ENCODE measurements at regions of chr4 and their contacts with region 1.

Region 1: DNA sequence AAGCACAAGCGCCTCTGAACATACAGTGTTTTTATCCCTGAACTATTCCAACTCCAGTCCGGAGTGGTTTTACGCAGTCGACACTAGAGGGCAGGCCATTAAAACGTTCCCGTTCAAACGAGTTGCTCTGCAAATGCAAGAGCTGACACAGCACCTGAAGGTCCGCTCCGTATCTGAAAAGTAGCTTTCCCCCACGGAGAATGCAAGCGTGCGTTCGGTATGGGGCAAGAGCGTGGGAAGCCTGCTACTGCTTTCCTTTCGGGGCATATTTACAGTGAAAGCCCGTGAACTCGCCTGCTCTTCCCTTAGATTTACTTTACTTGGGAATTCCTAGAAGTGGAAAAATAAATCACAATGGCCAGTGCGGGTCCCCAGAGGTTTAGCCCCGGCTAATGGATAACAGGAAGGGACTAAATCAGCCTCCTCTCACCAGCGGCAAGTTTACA is 190.8 kb downstream of the TSPAN5 start:
- DNase-seq: peak; percentile 46 to 56
- ATAC-seq: peak; percentile 93 to 99
- H3K4me3 ChIP-seq: peak overlapping the region; percentile 32 to 61 (median 47)
- H3K27ac ChIP-seq: no peak overlapping the region
- H3K4me1 ChIP-seq: peaks cover 3 to 5% of the 10 kb centered on the region in 2 donors
- H3K27me3 ChIP-seq: no peaks in the 10 kb centered on the region
- CTCF ChIP-seq: peak; percentile 38 to 73 (median 66)
- POLR2A ChIP-seq: no peak

Region 2: DNA sequence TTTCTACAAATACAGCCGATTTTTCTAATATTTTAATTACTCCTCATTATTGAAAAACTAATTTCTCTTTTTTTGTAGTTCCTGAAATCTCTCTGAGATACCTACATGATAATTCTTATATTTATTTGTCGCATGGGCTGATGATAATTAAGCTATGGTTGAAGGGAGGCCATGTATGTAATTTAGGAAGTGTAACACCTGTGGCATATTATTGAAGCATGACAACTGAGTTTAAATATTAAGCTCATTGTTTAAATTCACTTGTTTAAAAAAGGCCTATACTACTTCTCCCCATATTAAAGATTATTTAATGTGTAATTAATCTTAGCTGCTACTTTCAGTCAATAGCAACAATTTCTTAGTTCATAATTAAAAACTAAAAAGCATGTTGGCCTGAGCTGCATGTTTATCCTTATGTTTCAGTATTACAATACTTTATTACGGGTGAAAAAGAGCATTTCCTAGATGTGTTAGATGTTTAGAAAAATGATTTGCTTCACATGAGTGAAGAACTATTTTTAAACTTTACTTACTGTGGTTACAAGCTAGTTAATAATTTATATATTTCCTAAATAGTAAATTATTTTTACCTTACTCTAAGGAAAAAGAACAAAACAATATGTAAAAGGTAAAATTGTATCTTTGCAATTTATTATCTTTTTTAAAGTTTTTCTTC is 84.1 kb before region 1 on chr4:
- in situ Hi-C with region 1: no loop called
- intact Hi-C with region 1: no loop called
- DNase-seq: no peak
- ATAC-seq: no peak
- H3K4me3 ChIP-seq: no peak overlapping the region
- H3K27ac ChIP-seq: no peak overlapping the region
- H3K4me1 ChIP-seq: no peaks in the 10 kb centered on the region
- H3K27me3 ChIP-seq: no peaks in the 10 kb centered on the region
- CTCF ChIP-seq: no peak
- POLR2A ChIP-seq: no peak

Region 3: DNA sequence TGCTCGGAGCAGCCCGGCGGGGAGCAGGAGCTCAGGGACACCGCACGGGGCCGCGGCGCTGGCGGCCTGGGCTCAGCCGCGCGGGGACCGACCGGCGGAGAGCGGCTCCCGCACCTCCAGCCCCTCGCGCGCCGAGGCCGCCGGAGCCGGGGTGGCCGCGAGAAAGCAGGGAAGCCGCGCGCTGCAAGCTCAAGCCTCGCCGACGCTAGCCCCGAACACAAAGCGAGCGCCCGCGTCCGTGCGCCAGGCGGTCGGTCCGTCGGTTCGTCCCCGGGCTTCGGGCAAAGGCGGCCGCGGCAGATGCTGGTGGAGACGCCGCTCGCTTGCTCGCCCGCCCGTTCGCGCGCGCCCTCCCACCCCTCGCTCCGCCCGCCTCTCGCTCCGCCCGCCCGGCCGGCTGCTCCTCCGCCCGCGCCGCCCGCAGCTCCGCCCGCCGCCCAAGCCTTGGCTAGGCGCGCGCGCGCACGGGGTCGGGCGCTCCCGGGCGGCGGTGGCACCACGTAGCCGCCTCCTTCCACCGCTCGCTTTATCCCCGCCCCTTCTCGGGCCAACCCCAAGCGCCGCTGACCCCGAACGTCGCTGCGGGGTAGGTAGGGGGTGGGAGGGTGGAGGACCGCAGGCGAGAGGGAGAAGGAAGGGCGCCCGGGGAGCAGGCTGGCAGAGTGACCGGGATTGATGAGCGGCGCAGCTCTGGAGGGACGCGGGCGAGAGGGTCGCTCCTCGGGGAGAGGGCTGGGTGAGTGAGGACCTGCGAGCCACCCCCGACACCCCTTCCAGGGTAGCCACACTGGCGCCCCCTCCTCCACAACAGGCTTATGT is 190.8 kb after region 1 on chr4 and contains the start of gene TSPAN5:
- in situ Hi-C with region 1: no loop called
- intact Hi-C with region 1: loop called (anchors 10 kb)
- DNase-seq: peak; percentile 30 to 48
- ATAC-seq: peak; percentile 51 to 55
- H3K4me3 ChIP-seq: peak within 1 kb of the TSS; percentile 57 to 75 (median 69)
- H3K27ac ChIP-seq: peak within 1 kb of the TSS; percentile 74 to 81 (median 78)
- H3K4me1 ChIP-seq: peaks cover 21 to 28% of the 10 kb centered on the region in 2 donors
- H3K27me3 ChIP-seq: peaks cover 0 to 17% (median 0%) of the 10 kb centered on the region in 3 donors
- CTCF ChIP-seq: no peak
- POLR2A ChIP-seq: peak; percentile 54 to 67
- total RNA-seq, gene TSPAN5: 0.55 to 18.7 (median 0.79) TPM

Region 4: DNA sequence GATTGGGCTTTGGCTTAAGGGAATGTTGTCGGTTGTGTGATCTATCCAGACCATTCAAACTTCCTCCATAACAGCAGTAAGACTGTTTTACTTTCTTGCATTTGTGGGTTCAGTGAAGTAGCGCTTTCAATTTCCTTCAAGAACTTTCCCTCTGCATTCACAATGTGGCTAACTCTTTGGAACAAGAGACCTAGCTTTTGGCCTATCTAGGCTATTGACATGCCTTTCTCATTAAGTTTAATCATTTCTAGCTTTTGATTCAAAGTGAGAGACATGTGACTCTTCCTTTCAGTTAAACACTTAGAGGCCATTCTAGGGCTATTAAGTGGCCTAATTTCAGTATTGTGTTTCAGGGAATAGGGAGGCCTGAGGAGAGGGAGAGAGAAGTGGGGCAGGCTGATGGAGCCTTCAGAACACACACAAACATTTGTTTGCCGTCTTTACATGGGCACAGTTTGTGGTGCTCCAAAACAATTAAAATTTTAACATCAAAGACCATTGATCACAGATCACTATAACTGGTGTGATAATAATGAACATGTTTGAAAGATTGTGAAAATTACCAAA is 586.9 kb after region 1 on chr4:
- in situ Hi-C with region 1: loop called in 2 of 4 experiments (anchors 10 kb)
- intact Hi-C with region 1: loop called (anchors 5 kb)
- DNase-seq: no peak
- ATAC-seq: no peak
- H3K4me3 ChIP-seq: no peak overlapping the region
- H3K27ac ChIP-seq: no peak overlapping the region
- H3K4me1 ChIP-seq: no peaks in the 10 kb centered on the region
- H3K27me3 ChIP-seq: no peaks in the 10 kb centered on the region
- CTCF ChIP-seq: no peak
- POLR2A ChIP-seq: no peak

Region 5: DNA sequence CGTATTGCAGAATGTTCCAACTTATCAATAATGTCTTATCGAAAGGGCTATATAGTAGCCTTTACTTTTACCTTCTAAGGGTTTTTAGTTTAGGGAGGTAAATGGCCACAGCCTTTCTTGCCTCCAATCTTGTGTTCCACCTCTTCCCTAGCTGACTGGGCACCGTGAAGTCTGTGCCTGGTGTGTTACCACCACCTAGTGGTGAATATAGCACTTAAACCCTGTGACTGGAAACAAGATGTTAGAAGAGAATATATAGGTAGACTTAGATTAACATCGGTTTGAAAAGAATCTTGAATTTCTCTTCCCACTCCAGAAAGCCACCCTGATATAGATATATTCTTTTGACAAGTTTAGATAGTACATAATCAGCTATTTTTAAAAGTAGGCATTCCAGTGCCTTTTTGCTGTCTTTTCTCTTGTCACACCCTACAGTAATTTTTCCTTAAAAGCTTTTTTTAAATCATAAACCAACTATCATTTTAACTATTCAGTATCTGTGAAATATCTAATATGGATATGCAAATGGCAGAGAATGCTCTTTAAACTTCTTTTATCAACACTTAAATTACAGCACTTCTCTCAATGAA is 995.3 kb after region 1 on chr4:
- in situ Hi-C with region 1: loop called in 2 of 4 experiments (anchors 25 kb)
- intact Hi-C with region 1: loop called (anchors 2 kb)
- DNase-seq: peak; percentile 19 to 42
- ATAC-seq: peak; percentile 70 to 82
- H3K4me3 ChIP-seq: no peak overlapping the region
- H3K27ac ChIP-seq: no peak overlapping the region
- H3K4me1 ChIP-seq: no peaks in the 10 kb centered on the region
- H3K27me3 ChIP-seq: no peaks in the 10 kb centered on the region
- CTCF ChIP-seq: peak; percentile 52 to 75 (median 66)
- POLR2A ChIP-seq: no peak

Measured in gastrocnemius medialis (tissue), 4 donors.